ENCODE measurements at regions of chr10 and their contacts with region 1.

Region 1: GRCh38 chr10:106705681-106706100 is 458.8 kb downstream of the SORCS1 start:
- DNase-seq: peak; percentile 69
- H3K4me3 ChIP-seq: no peak overlapping the region
- H3K27ac ChIP-seq: no peak overlapping the region
- H3K4me1 ChIP-seq: no peaks in the 10 kb centered on the region
- H3K27me3 ChIP-seq: no peaks in the 10 kb centered on the region
- CTCF ChIP-seq: peak; percentile 67

Region 2: DNA sequence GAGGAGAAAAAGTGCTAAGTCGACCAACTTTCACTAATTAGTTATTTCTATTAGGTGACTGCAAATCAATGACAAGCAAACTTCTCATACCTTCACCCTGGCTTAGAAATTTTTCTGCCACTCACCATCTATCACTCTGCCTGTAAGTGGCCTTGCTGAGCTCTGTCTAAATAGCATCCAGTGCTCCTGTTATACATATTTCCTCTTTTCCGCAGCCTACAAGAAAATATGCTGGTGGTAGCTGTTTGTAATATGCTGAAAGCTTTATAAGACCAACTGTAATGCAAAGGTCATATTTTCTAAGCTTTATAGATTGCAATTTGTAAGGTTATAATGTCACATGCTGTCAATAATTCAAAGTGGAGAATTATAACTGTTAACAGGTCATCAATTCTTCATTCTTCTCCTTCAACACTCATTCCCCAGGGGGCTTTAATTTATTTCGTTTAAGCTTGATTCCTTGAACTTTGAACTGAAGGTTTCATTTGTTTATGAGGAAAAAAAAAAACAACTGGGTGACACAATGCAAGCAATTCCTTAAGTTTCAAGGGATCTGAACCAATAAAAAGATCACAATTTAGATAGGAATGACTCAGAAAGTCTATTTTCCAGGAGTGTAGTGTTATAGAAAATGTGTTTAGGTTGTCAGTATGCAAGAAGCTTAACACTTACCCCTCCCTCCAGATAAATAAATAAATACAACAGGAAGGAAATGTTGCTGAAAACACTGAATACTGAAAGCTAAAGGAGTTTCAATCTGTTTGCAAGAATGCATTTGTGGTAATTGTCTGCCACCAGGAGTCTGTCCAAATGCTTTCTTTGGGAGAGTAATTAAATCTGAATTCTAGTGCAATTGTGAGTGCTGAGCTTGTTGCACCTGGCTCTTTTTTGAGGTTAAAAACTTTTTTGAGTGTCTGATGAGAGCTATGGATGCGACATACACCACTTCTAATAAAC is 275.1 kb after region 1 on chr10:
- intact Hi-C with region 1: loop called (anchors 10 kb)
- DNase-seq: no peak
- H3K4me3 ChIP-seq: no peak overlapping the region
- H3K27ac ChIP-seq: no peak overlapping the region
- H3K4me1 ChIP-seq: no peaks in the 10 kb centered on the region
- H3K27me3 ChIP-seq: no peaks in the 10 kb centered on the region
- CTCF ChIP-seq: no peak

Region 3: DNA sequence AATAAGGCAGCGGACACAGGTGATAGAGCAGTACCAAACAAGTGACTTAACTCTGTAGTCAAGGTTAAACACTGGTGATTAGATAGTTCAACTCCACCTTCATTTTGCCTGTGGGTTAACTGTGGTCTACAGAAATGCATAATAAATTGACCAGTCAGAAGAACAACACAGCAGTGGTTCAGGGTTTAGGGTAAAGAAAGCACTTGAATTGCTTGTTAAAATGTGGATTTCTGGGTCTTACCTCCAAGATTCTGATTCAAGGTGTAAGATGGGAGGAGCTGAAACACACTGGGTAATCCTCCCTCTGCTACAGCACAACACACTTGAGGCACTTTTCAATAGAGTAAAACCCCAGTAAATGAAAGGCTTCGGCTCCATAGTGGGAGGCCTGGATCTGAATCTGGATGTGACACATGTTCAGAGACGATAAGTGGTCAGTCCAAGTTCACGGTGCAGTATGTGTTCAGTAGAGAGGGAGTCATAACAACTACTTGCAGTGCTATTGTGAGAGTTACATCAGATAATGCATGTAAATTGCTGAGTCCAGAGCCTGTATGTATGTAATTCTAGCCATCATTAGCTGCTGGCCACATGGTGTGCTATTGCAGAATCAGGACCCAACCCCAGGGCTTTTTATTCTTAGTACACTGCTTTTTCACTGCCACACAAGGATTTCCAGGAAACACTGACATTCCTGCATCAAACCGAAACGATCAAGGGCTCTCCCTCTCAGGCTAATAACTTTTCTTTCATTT is 317.1 kb after region 1 on chr10:
- intact Hi-C with region 1: no loop called
- DNase-seq: no peak
- H3K4me3 ChIP-seq: no peak overlapping the region
- H3K27ac ChIP-seq: no peak overlapping the region
- H3K4me1 ChIP-seq: no peaks in the 10 kb centered on the region
- H3K27me3 ChIP-seq: no peaks in the 10 kb centered on the region
- CTCF ChIP-seq: no peak

Region 4: GRCh38 chr10:107144490-107144889 is 438.8 kb after region 1 on chr10:
- intact Hi-C with region 1: loop called (anchors 10 kb)
- DNase-seq: no peak
- H3K4me3 ChIP-seq: no peak overlapping the region
- H3K27ac ChIP-seq: no peak overlapping the region
- H3K4me1 ChIP-seq: no peaks in the 10 kb centered on the region
- H3K27me3 ChIP-seq: no peaks in the 10 kb centered on the region
- CTCF ChIP-seq: no peak

Region 5: DNA sequence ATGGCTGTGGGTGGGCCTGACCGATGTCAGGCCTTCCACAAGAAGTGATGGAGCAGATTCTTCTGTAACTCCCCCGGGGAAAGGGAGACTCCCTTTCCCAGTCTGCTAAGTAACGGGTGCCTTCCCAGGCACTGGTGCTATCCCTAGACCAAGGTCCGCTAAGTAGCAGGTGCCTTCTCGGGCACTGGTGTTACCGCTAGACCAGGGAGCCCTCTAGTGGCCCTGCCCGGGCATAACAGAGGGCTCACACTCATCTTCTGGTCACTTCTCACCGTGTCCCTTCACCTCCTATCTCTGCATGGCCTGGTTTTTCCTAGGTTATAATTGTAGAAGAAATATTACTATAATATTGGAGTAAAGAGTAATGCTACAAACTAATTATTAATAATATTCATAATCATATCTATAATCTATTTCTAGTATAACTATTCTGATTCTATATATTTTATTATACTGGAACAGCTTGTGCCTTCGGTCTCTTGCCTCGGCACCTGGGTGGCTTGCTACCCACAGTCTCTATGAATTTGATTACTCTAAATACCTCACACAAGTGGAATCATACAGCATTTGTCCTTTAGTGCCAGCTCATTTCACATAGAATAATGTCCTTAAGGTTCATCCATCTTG is 1838.9 kb after region 1 on chr10:
- intact Hi-C with region 1: loop called (anchors 10 kb)
- DNase-seq: peak; percentile 66
- H3K4me3 ChIP-seq: no peak overlapping the region
- H3K27ac ChIP-seq: no peak overlapping the region
- H3K4me1 ChIP-seq: no peaks in the 10 kb centered on the region
- H3K27me3 ChIP-seq: no peaks in the 10 kb centered on the region
- CTCF ChIP-seq: peak; percentile 77

Measured in colonic mucosa (tissue), 4 donors.